ENCODE measurements at regions of chr22 and their contacts with region 1.

Region 1: GRCh38 chr22:29587938-29588699 is 7.2 kb upstream of the NIPSNAP1 start:
- DNase-seq: no peak
- H3K4me3 ChIP-seq: no peak overlapping the region
- H3K27ac ChIP-seq: no peak overlapping the region
- H3K4me1 ChIP-seq: no peaks in the 10 kb centered on the region
- H3K27me3 ChIP-seq: no peaks in the 10 kb centered on the region
- CTCF ChIP-seq: no peak
- EP300 ChIP-seq: no peak
- POLR2A ChIP-seq: no peak
- RAD21 ChIP-seq: no peak

Region 2: DNA sequence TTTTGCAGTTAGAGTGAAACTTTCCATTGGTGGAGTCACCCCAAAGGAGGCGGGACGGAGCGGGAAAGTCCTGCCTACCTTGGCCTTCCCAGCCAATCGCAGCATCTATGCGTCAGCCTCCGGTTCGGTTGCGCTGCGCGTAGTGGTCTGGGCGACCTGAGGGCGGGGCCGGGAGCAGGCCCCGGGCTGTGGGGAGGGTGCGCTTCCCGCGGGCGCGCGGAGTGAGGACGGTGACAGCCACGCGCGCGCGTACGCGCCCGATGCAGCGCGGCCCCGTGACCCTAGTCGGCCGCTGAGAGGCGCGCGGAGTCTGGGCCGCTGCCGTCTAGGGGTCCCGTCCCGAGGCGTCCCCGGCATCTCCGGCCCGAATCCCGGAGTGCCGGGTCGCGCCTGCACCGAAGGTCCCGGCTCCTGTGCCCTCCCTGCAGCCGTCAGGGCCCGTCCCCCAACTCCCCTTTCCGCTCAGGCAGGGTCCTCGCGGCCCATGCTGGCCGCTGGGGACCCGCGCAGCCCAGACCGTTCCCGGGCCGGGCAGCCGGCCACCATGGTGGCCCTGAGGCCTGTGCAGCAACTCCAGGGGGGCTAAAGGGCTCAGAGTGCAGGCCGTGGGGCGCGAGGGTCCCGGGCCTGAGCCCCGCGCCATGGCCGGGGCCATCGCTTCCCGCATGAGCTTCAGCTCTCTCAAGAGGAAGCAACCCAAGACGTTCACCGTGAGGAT is 15.4 kb after region 1 on chr22 and contains the start of gene NF2:
- CTCF ChIA-PET with region 1: interaction called, 38 read pairs
- POLR2A ChIA-PET with region 1: interaction called, 11 read pairs
- DNase-seq: peak; percentile 95 to 99
- H3K4me3 ChIP-seq: peak within 1 kb of the TSS; percentile 79 to 94 (median 82)
- H3K27ac ChIP-seq: peak within 1 kb of the TSS; percentile 13; the same call in 1 of the 2 replicates
- H3K4me1 ChIP-seq: peaks cover 3 to 10% (median 4%) of the 10 kb centered on the region in 4 experiments; a peak in 5 of 7 replicates
- H3K27me3 ChIP-seq: no peaks in the 10 kb centered on the region
- CTCF ChIP-seq: no peak
- EP300 ChIP-seq: no peak
- POLR2A ChIP-seq: peak in 1 of 2 experiments; percentile 65; a peak in 1 of 3 replicates
- RAD21 ChIP-seq: no peak
- total RNA-seq, gene NF2: 53.6 and 54.9 TPM in 2 replicates

Region 3: GRCh38 chr22:29750559-29751538 is 162.7 kb after region 1 on chr22:
- CTCF ChIA-PET with region 1: no interaction called
- POLR2A ChIA-PET with region 1: no interaction called
- DNase-seq: no peak
- H3K4me3 ChIP-seq: no peak overlapping the region
- H3K27ac ChIP-seq: no peak overlapping the region
- H3K4me1 ChIP-seq: peaks cover 0 to 2% (median 0%) of the 10 kb centered on the region in 4 experiments; a peak in 2 of 7 replicates
- H3K27me3 ChIP-seq: no peaks in the 10 kb centered on the region
- CTCF ChIP-seq: no peak
- EP300 ChIP-seq: no peak
- POLR2A ChIP-seq: no peak
- RAD21 ChIP-seq: no peak

Region 4: GRCh38 chr22:29798801-29799680 is 210.9 kb after region 1 on chr22:
- CTCF ChIA-PET with region 1: no interaction called
- POLR2A ChIA-PET with region 1: no interaction called
- DNase-seq: no peak
- H3K4me3 ChIP-seq: no peak overlapping the region
- H3K27ac ChIP-seq: 0 out of 2 replicates have a peak overlapping the region, but pooled peaks have one; percentile 63
- H3K4me1 ChIP-seq: peaks cover 0 to 3% (median 0%) of the 10 kb centered on the region in 4 experiments; a peak in 1 of 7 replicates
- H3K27me3 ChIP-seq: no peaks in the 10 kb centered on the region
- CTCF ChIP-seq: no peak
- EP300 ChIP-seq: no peak
- POLR2A ChIP-seq: no peak
- RAD21 ChIP-seq: no peak